HEK293 (cell line): ENCODE measurements at regions of chrX and their contacts with region 1.

Region 1: GRCh38 chrX:130539721-130540321 is 138.0 kb downstream of the RBMX2 start:
- H3K4me3 ChIP-seq: no peak overlapping the region
- H3K27ac ChIP-seq: no peak overlapping the region
- H3K4me1 ChIP-seq: no peaks in the 10 kb centered on the region
- CTCF ChIP-seq: no peak; the same call in 1 of the 2 replicates

Region 2: DNA sequence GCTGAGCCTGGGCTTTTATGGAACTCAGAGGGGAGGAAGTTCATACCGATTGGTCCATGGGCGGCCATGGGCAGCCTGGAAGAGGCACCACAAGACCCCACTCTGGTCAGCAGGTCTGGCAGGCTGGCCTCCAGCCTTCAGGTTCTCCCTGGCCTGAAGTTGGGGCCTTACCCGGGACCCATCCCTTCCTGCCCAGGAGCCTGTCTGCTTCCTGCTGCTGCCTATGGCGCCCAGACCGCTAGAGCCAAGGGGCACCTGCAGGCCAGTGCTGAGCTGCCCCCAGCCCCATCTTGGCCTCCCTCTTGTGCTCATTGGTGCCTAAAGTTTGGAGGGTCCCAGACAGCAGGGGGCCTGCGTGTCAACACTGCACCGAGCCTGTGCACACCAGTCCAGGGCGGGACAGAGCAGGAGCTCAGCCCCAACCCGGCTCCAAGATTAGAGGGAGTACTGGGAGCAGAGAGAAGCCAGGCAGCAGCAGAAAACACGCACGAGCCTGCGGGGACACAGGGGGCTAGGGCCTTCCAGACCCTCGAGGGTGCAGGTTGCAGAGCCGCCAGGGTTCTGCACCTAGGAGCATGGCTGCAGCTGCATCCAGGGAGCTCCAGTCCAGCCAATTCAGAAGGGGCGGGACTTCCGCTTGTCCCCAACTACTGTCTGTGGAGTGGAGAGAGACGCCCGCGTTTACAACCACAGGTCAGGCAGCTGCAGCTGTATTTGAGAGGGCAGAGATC is 240.4 kb before region 1 on chrX:
- CTCF ChIA-PET with region 1: no interaction called
- POLR2A ChIA-PET with region 1: no interaction called
- H3K4me3 ChIP-seq: no peak overlapping the region
- H3K27ac ChIP-seq: no peak overlapping the region
- H3K4me1 ChIP-seq: 0 out of 2 replicates have a peak, but pooled peaks cover 2% of the 10 kb centered on the region
- CTCF ChIP-seq: no peak

Region 3: GRCh38 chrX:130385520-130385919 is 154.3 kb before region 1 on chrX and contains the start of gene GPR119:
- CTCF ChIA-PET with region 1: no interaction called
- POLR2A ChIA-PET with region 1: no interaction called
- H3K4me3 ChIP-seq: no peak within 1 kb of the TSS
- H3K27ac ChIP-seq: no peak within 1 kb of the TSS
- H3K4me1 ChIP-seq: no peaks in the 10 kb centered on the region
- CTCF ChIP-seq: no peak

Region 4: DNA sequence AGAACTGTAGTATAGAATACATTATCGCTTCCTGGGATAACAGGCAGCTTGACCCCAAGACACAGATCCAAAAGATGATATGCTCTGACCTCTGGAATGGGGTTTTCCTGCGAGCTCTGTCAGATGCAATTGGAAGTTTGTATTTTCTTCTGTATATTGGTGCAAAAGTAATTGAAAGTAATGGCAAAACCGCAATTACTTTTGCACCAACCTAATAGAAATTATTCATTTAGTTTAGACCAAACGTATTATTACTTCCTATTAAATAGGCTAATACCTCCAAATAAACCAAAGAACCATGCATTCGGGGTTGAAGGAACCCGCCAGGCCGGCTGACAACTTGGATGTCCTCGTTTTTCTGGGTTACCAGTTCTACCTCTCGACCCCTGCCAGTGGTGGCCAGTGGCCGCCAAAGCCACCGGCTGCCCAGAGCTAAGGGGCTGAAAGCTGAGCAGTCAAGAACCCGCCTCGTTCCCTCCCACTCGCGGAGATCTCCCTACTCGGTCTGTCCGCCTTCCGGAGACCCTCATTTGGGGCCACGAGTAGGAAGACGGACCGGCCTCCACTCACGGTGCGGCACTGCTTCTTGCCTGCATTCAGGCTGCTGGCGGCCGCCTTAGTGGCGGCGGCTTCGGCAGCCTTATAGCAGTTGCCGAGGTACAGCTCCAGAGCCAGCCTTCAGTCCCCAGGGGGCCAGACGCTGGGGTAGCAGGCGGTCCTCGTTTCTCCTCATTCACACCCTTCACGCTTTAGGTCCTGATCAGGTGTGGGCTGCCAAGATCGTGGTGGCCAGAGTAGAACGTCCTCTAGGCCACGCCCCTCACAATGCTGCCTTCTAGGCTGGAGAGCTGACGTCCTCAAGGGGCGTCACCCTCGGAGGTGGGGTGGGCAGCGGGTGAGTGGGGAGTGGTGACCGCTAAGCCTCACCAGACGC is 16.1 kb before region 1 on chrX:
- CTCF ChIA-PET with region 1: interaction called, 12 read pairs
- POLR2A ChIA-PET with region 1: no interaction called
- H3K4me3 ChIP-seq: peak overlapping the region; percentile 37
- H3K27ac ChIP-seq: no peak overlapping the region
- H3K4me1 ChIP-seq: no peaks in the 10 kb centered on the region
- CTCF ChIP-seq: no peak

Region 5: GRCh38 chrX:130555341-130555740 is 15.5 kb after region 1 on chrX:
- CTCF ChIA-PET with region 1: interaction called, 31 read pairs
- POLR2A ChIA-PET with region 1: no interaction called
- H3K4me3 ChIP-seq: no peak overlapping the region
- H3K27ac ChIP-seq: no peak overlapping the region
- H3K4me1 ChIP-seq: no peaks in the 10 kb centered on the region
- CTCF ChIP-seq: no peak

Region 6: DNA sequence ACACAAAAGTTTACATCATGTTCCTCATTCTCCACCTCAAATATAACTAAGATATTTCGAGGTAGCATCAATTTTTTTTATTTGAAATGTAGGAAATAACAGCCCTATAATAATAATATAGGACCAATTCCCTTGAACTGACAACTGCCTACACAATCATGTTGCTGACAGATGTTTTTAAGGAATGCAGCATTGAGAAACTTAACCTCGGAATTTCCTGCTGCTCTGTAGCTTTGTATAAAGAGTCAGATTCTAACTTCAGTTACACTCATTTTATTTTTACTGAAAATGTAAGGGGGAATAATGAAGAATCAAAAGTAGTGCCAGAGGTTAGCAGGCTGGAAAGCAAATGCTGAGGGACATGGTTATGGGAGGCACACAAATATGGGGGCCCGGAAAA is 97.8 kb after region 1 on chrX:
- CTCF ChIA-PET with region 1: interaction called, 13 read pairs
- POLR2A ChIA-PET with region 1: no interaction called
- H3K4me3 ChIP-seq: no peak overlapping the region
- H3K27ac ChIP-seq: no peak overlapping the region
- H3K4me1 ChIP-seq: no peaks in the 10 kb centered on the region
- CTCF ChIP-seq: no peak

Region 7: DNA sequence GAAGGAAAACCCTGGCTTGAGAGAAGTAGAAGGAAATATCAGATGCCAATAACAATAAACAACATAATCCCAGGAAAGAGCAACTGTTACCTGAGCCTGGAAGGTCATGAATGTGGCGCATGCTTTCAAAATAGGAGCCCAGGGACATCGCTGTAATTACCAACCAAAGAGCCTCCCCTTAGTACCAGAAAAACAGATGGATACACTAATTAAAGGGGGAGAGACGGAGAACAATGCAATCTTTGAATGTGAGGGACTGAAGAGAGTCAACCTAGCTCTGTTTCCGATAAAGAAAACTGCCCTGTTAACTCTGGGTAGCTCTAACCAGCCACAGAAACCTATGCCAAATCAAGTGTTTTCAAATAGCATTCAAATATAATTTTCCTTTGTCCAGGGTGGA is 201.8 kb after region 1 on chrX:
- CTCF ChIA-PET with region 1: no interaction called
- POLR2A ChIA-PET with region 1: no interaction called
- H3K4me3 ChIP-seq: no peak overlapping the region
- H3K27ac ChIP-seq: no peak overlapping the region
- H3K4me1 ChIP-seq: no peaks in the 10 kb centered on the region; the same call in 1 of the 2 replicates
- CTCF ChIP-seq: no peak